Astrocyte of the spinal cord (primary cell): ENCODE measurements at regions of chr11 and their contacts with region 1.

Region 1: GRCh38 chr11:27705873-27706820 is 5.9 kb upstream of the BDNF start:
- DNase-seq: no peak
- H3K4me3 ChIP-seq: no peak overlapping the region
- CTCF ChIP-seq: peak; percentile 75

Region 2: GRCh38 chr11:27506200-27507182 is 199.7 kb before region 1 on chr11 and contains the start of gene LIN7C:
- in situ Hi-C with region 1: no loop called
- DNase-seq: peak; percentile 97
- H3K4me3 ChIP-seq: peak within 1 kb of the TSS; percentile 100
- CTCF ChIP-seq: no peak

Region 3: GRCh38 chr11:27882066-27882697 is 176.0 kb after region 1 on chr11:
- in situ Hi-C with region 1: no loop called
- DNase-seq: peak; percentile 16
- H3K4me3 ChIP-seq: no peak overlapping the region
- CTCF ChIP-seq: no peak

Region 4: DNA sequence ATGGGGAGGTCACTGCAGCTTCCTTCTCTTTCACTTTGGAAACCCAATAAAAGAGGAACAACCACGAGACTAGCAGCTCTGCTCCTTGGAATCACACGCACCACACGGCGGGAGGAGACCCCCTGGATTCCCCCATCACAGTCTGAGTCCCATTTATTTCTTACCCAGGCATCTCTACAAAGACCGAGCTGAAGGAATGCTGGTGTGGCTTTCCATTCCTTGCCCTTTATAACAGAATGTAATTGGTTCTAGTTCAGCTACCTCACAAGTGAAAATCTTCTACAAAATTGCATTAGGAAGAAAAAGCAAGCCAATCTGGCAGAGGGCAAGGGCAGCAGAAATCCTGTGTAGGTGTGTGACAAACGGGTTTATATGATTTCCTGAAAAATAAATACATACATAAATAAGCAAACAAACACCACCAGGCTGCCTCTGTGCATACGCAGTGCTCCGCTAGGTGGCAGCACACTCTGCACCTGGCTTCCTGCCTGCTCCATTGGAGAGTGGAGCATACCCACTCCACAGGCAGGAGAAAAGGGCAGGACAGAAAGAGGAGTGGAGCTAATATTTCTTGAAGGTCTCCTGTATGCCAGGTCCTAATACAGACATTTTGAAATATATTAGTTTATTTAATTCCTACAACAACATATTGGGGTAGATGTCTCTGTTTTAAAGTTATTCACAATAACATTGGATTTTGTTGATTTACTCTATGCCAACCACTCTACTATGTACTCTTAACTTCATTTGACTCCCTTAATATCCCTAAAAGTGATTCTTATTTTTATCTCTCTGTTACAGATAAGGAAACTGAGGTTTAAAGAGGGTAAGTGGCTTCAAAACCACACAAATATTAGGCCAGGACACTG is 1637.6 kb after region 1 on chr11:
- in situ Hi-C with region 1: loop called (anchors 25 kb)
- DNase-seq: peak; percentile 36
- H3K4me3 ChIP-seq: no peak overlapping the region
- CTCF ChIP-seq: peak; percentile 96